Posterior vena cava (tissue), 2 donors: ENCODE measurements at regions of chr1 and their contacts with region 1.

Region 1: GRCh38 chr1:1309251-1310108 is 1.1 kb downstream of the PUSL1 start:
- DNase-seq: no peak

Region 2: DNA sequence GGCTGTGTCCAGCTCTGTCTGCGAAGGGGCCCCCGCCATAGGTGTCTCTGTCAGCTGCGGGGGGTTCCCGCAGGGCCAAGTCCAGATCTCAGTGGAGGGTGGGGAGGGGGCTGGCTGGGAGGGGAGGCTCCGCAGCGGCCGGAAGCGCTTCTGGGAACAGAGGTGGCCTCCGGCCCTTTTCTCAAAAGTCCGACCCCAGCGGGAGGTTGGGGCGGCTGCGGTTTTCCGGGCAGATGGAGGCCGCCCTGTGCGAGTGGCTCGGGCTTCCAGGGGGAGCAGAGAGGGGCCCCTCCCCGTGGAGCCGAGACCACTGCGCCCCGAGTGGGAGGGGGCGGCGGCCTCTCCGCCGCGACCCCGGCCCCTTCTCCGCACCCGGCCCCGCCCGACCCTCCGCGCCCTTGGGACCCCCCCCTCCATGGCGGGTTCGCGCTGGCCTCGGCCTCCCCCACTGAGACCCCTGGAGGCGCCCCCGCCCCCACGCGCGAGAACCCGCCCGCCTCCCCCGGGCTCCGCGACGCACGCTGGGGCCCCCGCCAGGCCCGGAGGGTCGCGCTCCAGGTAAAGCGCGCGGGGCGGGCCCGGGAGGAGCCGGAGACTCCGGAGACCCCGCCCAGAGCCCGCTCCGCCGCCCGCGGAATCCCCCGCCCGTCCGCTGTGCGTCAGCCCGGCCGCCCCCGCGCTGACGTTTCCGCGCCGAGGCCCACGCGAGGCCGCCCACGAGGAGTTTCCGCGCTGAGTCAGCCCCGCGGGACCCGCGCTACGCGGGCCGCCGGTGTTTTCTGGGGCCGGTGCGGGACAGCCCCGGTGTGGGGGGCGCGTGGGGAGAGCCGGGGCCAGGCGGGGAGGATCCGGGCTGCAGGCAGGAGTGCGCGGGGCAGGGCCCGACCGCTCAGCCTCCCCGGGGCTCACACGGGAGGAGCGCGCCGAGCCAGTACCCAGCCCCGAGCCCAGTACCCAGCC is 108.3 kb before region 1 on chr1:
- intact Hi-C with region 1: no loop called
- DNase-seq: peak; percentile 87

Region 3: DNA sequence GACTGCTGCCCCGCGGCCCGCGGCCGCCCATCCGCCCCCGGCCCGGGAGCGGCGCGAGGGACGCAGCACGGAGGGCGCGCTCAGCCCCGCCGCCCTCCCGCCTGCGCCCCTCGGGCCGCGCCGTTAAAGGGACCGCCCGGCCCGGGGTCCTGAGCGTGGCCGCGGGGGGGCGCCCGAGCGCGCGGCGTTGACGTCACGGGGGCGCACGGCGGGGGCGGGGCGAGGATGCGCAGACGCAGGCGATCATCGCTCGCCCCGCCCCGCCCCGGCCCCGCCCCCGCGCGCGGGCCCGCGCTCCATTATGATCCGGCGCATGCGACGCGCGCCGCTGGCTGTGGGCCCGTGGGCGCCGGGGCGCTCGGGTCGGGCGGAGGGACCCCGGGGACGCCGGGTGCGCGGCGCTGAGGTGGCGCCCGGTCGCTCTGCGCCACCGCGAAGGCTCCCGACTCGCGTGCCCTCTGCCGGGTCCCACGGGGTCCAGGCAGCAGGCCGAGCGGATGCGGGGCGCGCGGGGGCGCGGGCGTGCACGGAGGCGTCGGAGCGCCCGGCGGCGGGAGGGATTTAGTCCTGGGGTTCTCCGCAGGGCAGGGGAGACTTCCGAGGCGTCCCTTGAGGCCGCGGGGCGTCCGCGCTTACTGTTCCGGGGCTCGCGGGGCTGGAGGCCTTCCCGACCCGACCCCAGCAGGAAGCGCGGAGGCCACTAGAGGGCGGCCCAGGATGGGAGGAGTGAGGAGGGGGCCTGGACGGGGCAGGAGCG is 40.0 kb after region 1 on chr1 and contains the start of gene DVL1:
- intact Hi-C with region 1: loop called in 1 of 2 experiments (anchors 5 kb)
- DNase-seq: no peak
- total RNA-seq, gene DVL1: 45.9 to 61.9 TPM